Sciatic nerve (tissue), 2 donors: ENCODE measurements at regions of chr6 and their contacts with region 1.

Region 1: DNA sequence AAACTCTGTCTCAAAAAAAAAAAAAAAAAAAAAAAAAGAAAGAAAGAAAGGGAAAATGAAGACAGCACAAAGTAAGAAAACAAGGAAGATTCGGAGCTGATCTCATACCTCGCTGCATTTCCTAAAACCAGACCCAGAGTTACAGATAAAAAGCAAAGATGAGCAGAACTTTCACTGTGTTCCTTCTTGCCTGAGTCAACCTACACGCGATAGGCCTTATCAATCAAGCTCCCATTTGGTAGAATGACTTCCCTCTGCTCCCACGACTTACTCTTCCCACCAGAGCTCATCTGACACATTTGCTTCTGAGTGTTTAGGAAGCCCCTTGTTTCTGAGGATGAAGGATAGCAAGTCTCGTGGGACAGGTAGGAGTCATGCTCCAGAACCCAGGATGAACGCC is 302.9 kb downstream of the TFAP2A start:
- DNase-seq: no peak
- ATAC-seq: no peak

Region 2: GRCh38 chr6:10138917-10139316 is 26.9 kb after region 1 on chr6:
- intact Hi-C with region 1: loop called (anchors 1 kb)
- DNase-seq: no peak
- ATAC-seq: no peak

Region 3: DNA sequence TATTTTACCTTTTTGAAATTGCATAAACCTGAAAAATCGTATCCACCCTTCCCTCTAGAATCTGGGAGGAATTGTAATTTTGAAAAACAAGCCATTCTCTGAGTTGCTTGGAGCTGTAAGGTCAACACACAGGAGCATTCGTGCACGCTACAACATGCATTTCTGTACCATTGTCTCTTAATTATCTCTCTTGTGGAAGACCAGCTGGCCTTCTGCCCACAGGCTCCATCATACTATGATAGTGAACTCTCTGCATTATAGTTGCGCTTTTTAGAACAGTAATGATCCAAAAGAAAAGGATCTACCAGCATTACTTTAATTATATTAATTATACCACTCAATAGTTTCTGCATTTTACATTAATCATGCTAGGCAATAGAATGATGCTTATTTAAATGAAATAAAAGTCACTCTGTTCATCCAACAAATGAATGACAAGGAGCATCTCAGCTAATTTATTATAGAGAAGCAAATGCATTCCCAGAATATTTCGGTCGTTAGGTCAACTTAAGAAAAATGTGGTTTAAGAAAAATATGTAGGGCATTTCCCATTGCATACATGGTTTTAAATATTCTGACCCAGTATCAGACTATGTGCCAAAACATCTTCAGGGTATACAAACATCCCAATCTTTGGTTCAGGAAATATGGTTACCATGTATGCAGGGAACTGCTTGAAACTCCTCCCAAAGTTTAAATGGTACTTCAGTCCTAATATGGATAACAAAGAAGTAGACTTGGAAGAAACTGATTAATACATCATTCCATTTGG is 39.4 kb after region 1 on chr6:
- intact Hi-C with region 1: no loop called
- DNase-seq: no peak
- ATAC-seq: no peak

Region 4: DNA sequence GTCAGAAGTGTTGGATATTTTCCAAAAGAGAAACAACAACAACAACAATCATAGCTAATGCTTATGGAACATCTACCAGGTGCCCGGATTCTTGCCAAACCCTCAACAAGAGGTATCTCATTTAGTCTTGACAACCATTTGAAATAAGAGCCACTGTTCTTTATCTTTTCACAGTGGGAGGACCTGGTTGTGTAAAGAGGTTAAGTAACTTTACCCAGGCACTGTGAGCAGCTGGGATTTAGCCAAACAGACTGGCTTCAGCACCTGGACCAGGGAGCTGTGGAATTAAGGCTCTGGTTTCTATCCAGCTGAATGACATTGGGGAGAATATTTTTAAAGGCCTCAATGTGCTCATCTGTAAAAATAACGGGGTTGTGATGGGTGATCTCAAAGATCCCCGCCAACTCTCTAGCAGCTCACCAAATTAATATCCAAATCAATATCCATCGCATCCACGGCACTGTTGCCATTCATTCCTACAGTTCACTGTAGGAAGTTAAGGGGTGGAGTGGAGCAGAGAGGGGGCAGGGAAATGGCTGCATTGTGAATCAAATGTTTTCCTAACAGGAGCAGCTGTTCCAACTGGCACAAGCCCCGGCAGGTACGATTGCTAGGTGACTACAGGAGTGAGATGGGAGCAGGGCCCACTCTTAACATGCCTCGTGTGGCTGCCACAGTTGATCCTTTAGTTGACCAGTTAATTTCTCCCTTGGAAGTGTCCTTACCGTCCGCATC is 471.0 kb after region 1 on chr6:
- intact Hi-C with region 1: no loop called
- DNase-seq: no peak
- ATAC-seq: no peak